AG04449 (cell line): ENCODE measurements at regions of chr11 and their contacts with region 1.

Region 1: GRCh38 chr11:58675334-58676155 is 53.1 kb downstream of the CNTF start:
- DNase-seq: no peak
- H3K4me3 ChIP-seq: no peak overlapping the region
- CTCF ChIP-seq: peak; percentile 96

Region 2: GRCh38 chr11:58579192-58580129 is 96.1 kb before region 1 on chr11:
- CTCF ChIA-PET with region 1: interaction called, 15 read pairs
- POLR2A ChIA-PET with region 1: no interaction called
- DNase-seq: no peak
- H3K4me3 ChIP-seq: peak overlapping the region; percentile 93
- CTCF ChIP-seq: peak; percentile 94

Region 3: DNA sequence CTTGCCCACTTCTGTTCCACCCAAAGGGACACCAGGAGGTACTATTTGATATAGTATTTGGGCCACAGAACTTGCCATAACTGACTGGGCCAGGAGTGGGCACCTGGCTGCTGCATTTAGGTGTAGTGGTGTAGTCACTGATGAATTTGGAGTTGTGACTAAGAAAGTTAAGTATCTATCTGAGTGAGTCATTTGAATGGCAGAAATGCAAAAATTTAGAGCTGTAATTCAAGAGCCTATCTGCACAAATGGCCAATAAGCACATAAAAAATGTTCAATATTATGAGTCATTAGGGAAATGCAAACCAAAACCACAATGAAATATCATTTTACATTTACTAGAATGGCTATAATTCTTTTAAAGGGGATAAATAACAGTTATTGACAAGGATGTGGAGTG is 154.2 kb after region 1 on chr11:
- CTCF ChIA-PET with region 1: no interaction called
- POLR2A ChIA-PET with region 1: no interaction called
- DNase-seq: peak; percentile 26
- H3K4me3 ChIP-seq: no peak overlapping the region
- CTCF ChIP-seq: no peak